ENCODE measurements at regions of chr15 and their contacts with region 1.

Region 1: DNA sequence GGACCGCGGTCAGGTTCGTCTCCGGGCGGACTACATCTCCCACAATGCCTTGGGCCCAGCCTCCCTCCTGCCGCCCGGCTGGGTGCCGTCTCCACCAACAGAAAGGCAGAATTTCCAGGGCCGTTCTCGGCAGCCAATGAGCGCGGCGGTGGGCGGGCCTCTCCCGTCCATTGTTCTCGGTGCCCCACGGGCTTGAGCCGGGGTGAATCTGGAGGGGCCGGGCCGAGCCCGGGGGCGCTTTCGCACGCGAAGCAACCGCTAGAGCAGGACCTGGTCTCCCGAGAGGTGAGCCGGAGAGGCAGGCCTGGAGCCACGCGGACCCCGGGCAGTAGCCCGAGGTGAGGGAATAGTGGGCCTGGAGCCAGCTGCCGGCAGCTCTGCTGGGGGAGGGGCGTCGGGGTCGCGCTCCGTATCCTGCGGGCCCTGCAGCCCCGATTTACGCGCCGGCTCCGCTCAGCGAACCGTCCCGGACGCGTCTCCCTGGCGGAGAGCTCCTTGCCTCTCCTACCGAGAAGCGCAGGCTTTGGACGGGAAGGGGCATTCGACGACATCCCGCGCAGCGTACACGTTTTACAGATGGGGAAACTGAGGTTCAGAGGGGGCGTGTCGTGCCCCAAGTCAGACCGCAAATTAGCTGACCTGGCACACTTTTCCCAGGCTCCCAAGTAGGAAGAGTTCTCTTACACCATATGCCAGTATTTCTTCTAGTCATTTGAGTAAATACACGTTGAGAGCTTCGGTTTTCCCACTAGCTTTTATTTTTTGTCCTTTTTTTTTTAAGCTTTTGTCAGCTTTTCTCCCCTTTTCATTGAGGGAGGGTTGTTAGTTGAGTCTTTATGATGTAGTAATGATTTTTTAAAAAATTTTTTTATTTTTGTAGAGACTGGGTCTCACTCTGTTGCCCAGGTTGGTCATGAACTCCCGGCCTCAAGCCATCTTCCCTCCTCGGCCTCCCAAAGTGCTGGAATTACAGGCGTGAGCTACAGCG is at the start of gene ZSCAN2:
- DNase-seq: peak; percentile 94 to 96
- ATAC-seq: peak; percentile 98 to 99 (median 99)
- H3K4me3 ChIP-seq: peak within 1 kb of the TSS; percentile 69 to 99 (median 82)
- H3K27ac ChIP-seq: peak within 1 kb of the TSS in 9 of 10 donors; percentile 46 to 80 (median 72)
- H3K4me1 ChIP-seq: peaks cover 0 to 51% (median 15%) of the 10 kb centered on the region in 9 donors
- H3K27me3 ChIP-seq: no peaks in the 10 kb centered on the region
- CTCF ChIP-seq: no peak
- total RNA-seq, gene ZSCAN2: 3.7 to 8.1 (median 5.9) TPM

Region 2: GRCh38 chr15:83653639-83654378 is 947.3 kb before region 1 on chr15 and contains the start of gene ADAMTSL3:
- intact Hi-C with region 1: no loop called
- DNase-seq: peak; percentile 80 to 90
- ATAC-seq: peak; percentile 34 to 82 (median 64)
- H3K4me3 ChIP-seq: peak within 1 kb of the TSS; percentile 38 to 72 (median 60)
- H3K27ac ChIP-seq: peak within 1 kb of the TSS; percentile 56 to 89 (median 85)
- H3K4me1 ChIP-seq: peaks cover 7 to 56% (median 20%) of the 10 kb centered on the region in 9 donors
- H3K27me3 ChIP-seq: peaks cover 0 to 36% (median 9%) of the 10 kb centered on the region in 7 donors
- CTCF ChIP-seq: peak in 3 of 9 donors; percentile 15 to 25 (median 24)
- total RNA-seq, gene ADAMTSL3: 4.3 to 15.4 (median 11.3) TPM

Region 3: GRCh38 chr15:84633311-84634227 is 32.4 kb after region 1 on chr15:
- intact Hi-C with region 1: loop called in 4 of 10 experiments (anchors 1 to 5 kb)
- DNase-seq: peak; percentile 62 to 78
- ATAC-seq: peak; percentile 53 to 81 (median 75)
- H3K4me3 ChIP-seq: peak overlapping the region; percentile 42 to 85 (median 72)
- H3K27ac ChIP-seq: peak overlapping the region; percentile 92 to 100 (median 98)
- H3K4me1 ChIP-seq: peaks cover 4 to 55% (median 45%) of the 10 kb centered on the region in 9 donors
- H3K27me3 ChIP-seq: no peaks in the 10 kb centered on the region
- CTCF ChIP-seq: no peak

Region 4: GRCh38 chr15:84643838-84644237 is 42.7 kb after region 1 on chr15:
- intact Hi-C with region 1: loop called in 2 of 10 experiments (anchors 5 kb)
- DNase-seq: no peak
- ATAC-seq: no peak
- H3K4me3 ChIP-seq: no peak overlapping the region
- H3K27ac ChIP-seq: no peak overlapping the region
- H3K4me1 ChIP-seq: peaks cover 0 to 9% (median 7%) of the 10 kb centered on the region in 9 donors
- H3K27me3 ChIP-seq: no peaks in the 10 kb centered on the region
- CTCF ChIP-seq: no peak

Region 5: DNA sequence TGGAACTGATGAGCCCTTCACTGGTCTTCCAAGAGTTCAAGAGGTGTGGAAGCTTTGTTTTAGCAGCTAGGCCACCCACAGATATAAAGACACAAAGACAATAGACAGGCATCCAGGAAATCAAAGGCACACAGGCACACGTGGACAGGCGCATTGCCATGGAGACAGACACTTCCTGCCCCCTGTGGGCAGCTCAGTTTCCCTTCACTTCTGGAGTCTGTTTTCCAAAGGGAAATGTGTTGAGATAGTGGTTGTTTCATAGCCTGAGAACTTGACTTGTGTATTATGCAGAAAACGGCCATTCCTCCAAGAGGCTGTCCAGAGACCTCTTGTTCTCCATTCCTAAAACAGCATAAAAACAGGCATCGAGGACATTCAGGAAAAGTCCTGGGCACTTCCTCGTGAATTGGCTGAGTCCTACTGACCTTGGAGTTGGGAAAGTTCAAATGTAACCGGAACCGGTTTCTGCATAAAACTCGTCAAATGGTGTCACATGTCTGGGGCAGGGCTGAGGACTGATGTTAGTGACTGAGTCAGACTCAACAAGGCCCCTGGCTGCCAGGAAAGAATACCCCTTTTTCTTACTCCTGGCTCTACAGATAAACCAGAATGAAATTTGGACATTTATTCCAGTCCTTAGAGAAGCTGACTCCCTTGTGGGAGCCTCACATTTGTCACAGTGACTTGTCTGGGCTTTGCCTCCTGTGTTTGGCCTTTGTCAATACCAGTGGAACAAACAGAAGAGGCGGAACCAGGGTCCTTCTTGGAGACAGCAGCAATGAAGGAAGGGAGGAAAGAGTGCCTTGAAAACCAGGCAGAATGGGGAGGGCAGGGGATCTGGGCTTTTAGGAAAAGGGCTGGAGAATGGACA is 217.4 kb after region 1 on chr15:
- intact Hi-C with region 1: loop called in 2 of 10 experiments (anchors 10 kb)
- DNase-seq: peak in 1 of 2 donors; percentile 71
- ATAC-seq: peak in 7 of 8 donors; percentile 12 to 63 (median 30)
- H3K4me3 ChIP-seq: peak overlapping the region; percentile 31 to 73 (median 64)
- H3K27ac ChIP-seq: peak overlapping the region; percentile 91 to 99 (median 96)
- H3K4me1 ChIP-seq: peaks cover 14 to 78% (median 70%) of the 10 kb centered on the region in 9 donors
- H3K27me3 ChIP-seq: no peaks in the 10 kb centered on the region
- CTCF ChIP-seq: peak in 4 of 9 donors; percentile 9 to 41 (median 24)

Region 6: GRCh38 chr15:84826369-84826823 is 225.3 kb after region 1 on chr15:
- intact Hi-C with region 1: loop called in 1 of 10 experiments (anchors 10 kb)
- DNase-seq: no peak
- ATAC-seq: peak in 5 of 8 donors; percentile 7 to 44 (median 33)
- H3K4me3 ChIP-seq: no peak overlapping the region
- H3K27ac ChIP-seq: peak overlapping the region in 9 of 10 donors; percentile 35 to 99 (median 95)
- H3K4me1 ChIP-seq: peaks cover 24 to 100% (median 96%) of the 10 kb centered on the region in 9 donors
- H3K27me3 ChIP-seq: no peaks in the 10 kb centered on the region
- CTCF ChIP-seq: peak in 7 of 9 donors; percentile 16 to 53 (median 40)

Region 7: GRCh38 chr15:85044251-85044853 is 443.2 kb after region 1 on chr15:
- intact Hi-C with region 1: loop called in 3 of 10 experiments (anchors 10 kb)
- DNase-seq: peak in 1 of 2 donors; percentile 78
- ATAC-seq: peak; percentile 67 to 80 (median 72)
- H3K4me3 ChIP-seq: no peak overlapping the region
- H3K27ac ChIP-seq: peak overlapping the region in 4 of 10 donors; percentile 73 to 88 (median 78)
- H3K4me1 ChIP-seq: peaks cover 0 to 63% (median 39%) of the 10 kb centered on the region in 9 donors
- H3K27me3 ChIP-seq: no peaks in the 10 kb centered on the region
- CTCF ChIP-seq: peak; percentile 49 to 80 (median 70)

Region 8: DNA sequence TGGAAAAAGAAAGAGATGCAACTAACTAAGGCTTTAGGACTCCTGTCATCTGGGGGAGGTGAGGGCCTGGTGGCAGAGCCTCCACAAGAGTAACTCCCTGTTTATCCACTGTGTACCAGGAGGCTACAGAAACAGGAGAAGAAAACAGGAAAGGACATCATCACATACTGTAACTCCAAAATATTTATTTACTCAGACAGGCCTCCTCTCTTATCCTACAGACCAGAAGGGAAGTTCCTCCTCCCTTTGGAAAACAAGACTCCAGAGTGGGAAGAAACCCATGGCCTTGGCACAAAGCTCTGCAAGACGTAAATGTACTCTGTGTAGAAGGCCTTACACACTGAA is 739.1 kb after region 1 on chr15:
- intact Hi-C with region 1: no loop called
- DNase-seq: no peak
- ATAC-seq: no peak
- H3K4me3 ChIP-seq: no peak overlapping the region
- H3K27ac ChIP-seq: peak overlapping the region in 8 of 10 donors; percentile 1 to 79 (median 58)
- H3K4me1 ChIP-seq: peaks cover 18 to 57% (median 42%) of the 10 kb centered on the region in 9 donors
- H3K27me3 ChIP-seq: no peaks in the 10 kb centered on the region
- CTCF ChIP-seq: no peak